ENCODE measurements at regions of chr14 and their contacts with region 1.

Region 1: GRCh38 chr14:95150910-95151309 is 6.4 kb downstream of the DICER1 start:
- DNase-seq: no peak
- ATAC-seq: no peak
- H3K4me3 ChIP-seq: no peak overlapping the region
- H3K27ac ChIP-seq: no peak overlapping the region
- H3K4me1 ChIP-seq: peaks cover 44% of the 10 kb centered on the region
- H3K27me3 ChIP-seq: no peaks in the 10 kb centered on the region
- CTCF ChIP-seq: no peak

Region 2: GRCh38 chr14:95098984-95099599 is 51.8 kb before region 1 on chr14:
- CTCF ChIA-PET with region 1: no interaction called
- POLR2A ChIA-PET with region 1: no interaction called
- intact Hi-C with region 1: loop called (anchors 5 kb)
- DNase-seq: peak; percentile 65
- ATAC-seq: peak; percentile 76
- H3K4me3 ChIP-seq: no peak overlapping the region
- H3K27ac ChIP-seq: no peak overlapping the region
- H3K4me1 ChIP-seq: no peaks in the 10 kb centered on the region
- H3K27me3 ChIP-seq: no peaks in the 10 kb centered on the region
- CTCF ChIP-seq: peak; percentile 80

Region 3: DNA sequence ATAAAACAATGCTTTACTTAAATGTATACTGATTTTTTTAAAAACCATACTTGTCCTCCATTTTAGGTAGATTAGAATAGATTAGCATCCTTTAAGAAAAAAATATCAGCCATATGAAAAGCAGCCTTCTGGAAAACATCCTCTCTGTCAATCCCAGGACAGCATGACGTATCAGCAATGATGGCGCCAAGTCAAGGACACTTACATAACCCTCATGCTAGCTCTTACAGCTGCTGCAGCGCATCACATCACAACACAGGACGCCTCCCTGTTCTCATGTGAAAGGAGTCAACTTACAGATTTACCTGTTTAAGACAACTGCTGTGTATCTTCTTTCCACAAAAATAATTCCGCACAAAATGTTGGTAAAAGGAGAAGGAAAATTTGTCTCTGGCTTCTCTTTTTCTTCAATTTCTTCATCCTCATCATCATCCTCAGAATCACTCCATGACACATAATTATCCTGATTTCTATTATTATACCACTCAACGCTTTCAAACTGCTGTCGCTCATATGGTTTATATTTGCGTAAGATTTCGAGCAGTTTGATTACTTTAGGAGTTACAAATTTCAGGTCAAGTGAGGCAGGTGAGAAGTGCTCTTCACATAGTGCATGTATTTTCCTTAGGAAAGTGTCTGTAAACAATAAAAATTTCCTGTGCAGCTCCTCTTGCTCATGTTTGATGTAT is 26.9 kb before region 1 on chr14:
- CTCF ChIA-PET with region 1: interaction called, 11 read pairs
- POLR2A ChIA-PET with region 1: no interaction called
- intact Hi-C with region 1: no loop called
- DNase-seq: no peak
- ATAC-seq: no peak
- H3K4me3 ChIP-seq: no peak overlapping the region
- H3K27ac ChIP-seq: no peak overlapping the region
- H3K4me1 ChIP-seq: peaks cover 6% of the 10 kb centered on the region; the same call in 1 of the 2 replicates
- H3K27me3 ChIP-seq: no peaks in the 10 kb centered on the region
- CTCF ChIP-seq: no peak

Region 4: DNA sequence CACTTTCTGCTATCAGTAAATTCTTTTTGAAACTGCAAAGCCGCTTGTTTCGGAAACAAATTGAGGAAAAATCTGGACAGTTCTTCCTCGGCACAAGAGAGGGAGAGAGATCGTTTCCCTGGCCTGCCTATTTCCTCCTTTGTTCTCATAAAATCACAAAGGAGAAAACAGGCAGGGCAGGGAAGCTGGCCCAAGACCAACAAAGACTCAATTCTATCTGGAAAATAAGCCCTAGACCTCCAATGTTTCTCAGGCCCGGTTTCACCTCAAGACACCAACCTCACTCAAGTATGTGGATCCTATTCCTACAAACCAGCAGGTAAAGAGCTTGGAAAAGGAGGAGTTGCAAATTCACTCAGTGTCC is 13.1 kb before region 1 on chr14:
- CTCF ChIA-PET with region 1: no interaction called
- POLR2A ChIA-PET with region 1: no interaction called
- intact Hi-C with region 1: loop called (anchors 1 kb)
- DNase-seq: peak; percentile 6
- ATAC-seq: peak; percentile 44
- H3K4me3 ChIP-seq: no peak overlapping the region
- H3K27ac ChIP-seq: no peak overlapping the region
- H3K4me1 ChIP-seq: peaks cover 8% of the 10 kb centered on the region; the same call in 1 of the 2 replicates
- H3K27me3 ChIP-seq: no peaks in the 10 kb centered on the region
- CTCF ChIP-seq: no peak